Panc1 (cell line): ENCODE measurements at regions of chr6 and their contacts with region 1.

Region 1: DNA sequence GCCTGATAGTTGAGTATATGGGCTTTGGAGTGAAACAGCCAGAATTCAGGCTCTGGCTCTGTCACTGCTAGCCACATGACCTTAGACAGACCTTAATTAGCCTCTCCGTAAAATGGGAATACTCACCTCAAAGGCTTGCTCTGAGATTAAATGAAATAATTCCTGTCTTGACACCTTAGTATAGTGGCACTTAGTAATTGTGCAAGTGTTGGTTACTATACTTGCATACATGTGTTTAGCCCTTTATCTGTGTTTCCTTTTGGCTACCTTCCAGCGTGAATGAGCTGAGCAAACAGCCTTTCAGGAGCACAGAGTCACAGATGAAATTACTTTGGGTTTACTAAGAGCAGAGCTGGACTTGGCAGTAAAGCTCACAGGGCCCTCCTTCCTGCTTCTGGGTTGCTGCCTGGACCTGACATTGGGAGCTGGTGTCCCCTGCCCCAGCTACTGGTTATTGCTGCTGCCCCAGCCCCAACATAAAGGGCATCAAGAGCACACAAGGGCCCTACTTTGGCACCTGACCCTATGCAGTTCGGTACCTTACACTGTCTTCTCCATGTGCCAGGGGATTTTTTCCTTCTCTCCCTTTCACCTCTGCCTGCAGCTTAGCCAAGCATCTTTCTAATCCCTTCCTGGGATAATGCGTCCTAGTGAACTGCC is 32.7 kb downstream of the CD164 start:
- DNase-seq: no peak
- ATAC-seq: 0 out of 2 replicates have a peak, but pooled peaks have one; percentile 17
- H3K4me3 ChIP-seq: no peak overlapping the region
- H3K27ac ChIP-seq: no peak overlapping the region
- H3K4me1 ChIP-seq: no peaks in the 10 kb centered on the region
- H3K27me3 ChIP-seq: no peaks in the 10 kb centered on the region
- CTCF ChIP-seq: no peak

Region 2: GRCh38 chr6:109202409-109203284 is 146.9 kb before region 1 on chr6:
- CTCF ChIA-PET with region 1: no interaction called
- POLR2A ChIA-PET with region 1: interaction called, 20 read pairs
- in situ Hi-C with region 1: no loop called
- intact Hi-C with region 1: no loop called
- DNase-seq: no peak
- ATAC-seq: no peak
- H3K4me3 ChIP-seq: no peak overlapping the region
- H3K27ac ChIP-seq: no peak overlapping the region
- H3K4me1 ChIP-seq: no peaks in the 10 kb centered on the region
- H3K27me3 ChIP-seq: peaks cover 10% of the 10 kb centered on the region; the same call in 1 of the 2 replicates
- CTCF ChIP-seq: no peak; the same call in 1 of the 2 replicates